Activated CD4-positive, alpha-beta memory T cell treated with anti-CD3 and anti-CD28 coated beads for 36 hours (primary cell): ENCODE measurements at regions of chr10 and their contacts with region 1.

Region 1: GRCh38 chr10:124741281-124741921 is 2.8 kb downstream of the FAM53B start:
- DNase-seq: peak; percentile 86
- H3K4me3 Mint-ChIP-seq: peak overlapping the region; percentile 91
- H3K27ac Mint-ChIP-seq: peak overlapping the region; percentile 88
- H3K4me1 Mint-ChIP-seq: peaks cover 72% of the 10 kb centered on the region
- H3K27me3 Mint-ChIP-seq: no peaks in the 10 kb centered on the region

Region 2: DNA sequence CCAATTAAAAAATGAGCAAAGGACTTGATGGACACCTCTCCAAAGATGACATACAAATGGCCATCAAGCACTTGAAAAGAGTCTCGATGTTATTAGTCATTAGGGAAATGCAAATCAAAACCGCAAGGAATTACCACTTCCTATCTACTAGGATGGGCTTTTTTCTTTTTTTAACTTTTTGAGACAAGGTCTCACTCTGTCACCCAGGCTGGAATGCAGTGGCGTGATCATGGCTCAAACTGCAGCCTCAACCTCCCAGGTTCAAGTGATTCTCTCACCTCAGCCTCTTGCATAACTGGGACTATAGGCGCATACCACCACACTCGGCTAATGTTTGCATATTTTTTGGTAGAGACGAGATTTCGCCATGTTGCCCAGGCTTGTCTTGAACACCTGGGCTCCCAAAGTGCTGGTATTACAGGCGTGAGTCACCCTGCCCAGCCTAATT is 305.2 kb before region 1 on chr10:
- CTCF ChIA-PET with region 1: no interaction called
- POLR2A ChIA-PET with region 1: no interaction called
- intact Hi-C with region 1: no loop called
- DNase-seq: no peak
- H3K4me3 Mint-ChIP-seq: no peak overlapping the region
- H3K27ac Mint-ChIP-seq: no peak overlapping the region
- H3K4me1 Mint-ChIP-seq: no peaks in the 10 kb centered on the region
- H3K27me3 Mint-ChIP-seq: peaks cover 3% of the 10 kb centered on the region

Region 3: DNA sequence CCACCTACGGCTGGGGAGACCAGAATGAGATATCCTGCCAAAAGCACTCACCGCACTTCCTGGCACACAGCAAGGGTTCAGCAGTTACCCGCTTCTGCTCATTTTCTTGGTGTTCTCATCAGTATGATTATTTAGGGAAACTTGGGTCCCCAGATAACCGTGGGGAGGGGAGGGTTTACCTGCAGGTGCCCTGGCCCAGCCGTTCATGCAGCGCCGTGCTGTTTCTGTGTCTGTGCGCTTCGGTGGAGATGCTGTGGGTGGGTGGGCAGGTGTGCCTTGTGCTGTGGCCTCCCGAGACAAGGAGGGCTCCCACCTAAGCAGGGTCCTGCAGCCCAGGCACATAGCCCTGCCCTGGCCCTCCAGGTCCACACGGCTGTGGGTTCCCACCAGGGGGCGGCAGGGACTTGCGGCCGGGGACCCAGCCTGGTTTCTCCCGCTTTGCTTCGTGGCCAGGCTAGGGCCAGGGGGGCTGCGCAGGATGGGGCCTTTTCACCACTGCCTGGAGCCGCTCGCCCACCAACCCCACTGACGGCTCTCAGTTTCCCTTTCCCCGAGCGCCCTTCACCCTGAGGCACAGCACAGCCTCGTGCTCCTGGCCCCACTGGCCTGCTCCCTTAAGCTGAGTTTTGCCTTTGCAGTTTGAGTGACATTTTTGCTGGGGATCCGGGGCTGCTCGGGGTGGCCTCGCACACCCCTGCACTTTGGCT is 201.3 kb before region 1 on chr10:
- CTCF ChIA-PET with region 1: interaction called, 51 read pairs
- POLR2A ChIA-PET with region 1: no interaction called
- intact Hi-C with region 1: loop called (anchors 1 kb)
- DNase-seq: peak; percentile 76
- H3K4me3 Mint-ChIP-seq: no peak overlapping the region
- H3K27ac Mint-ChIP-seq: no peak overlapping the region
- H3K4me1 Mint-ChIP-seq: peaks cover 3% of the 10 kb centered on the region
- H3K27me3 Mint-ChIP-seq: no peaks in the 10 kb centered on the region

Region 4: GRCh38 chr10:124632064-124632531 is 109.3 kb before region 1 on chr10:
- CTCF ChIA-PET with region 1: interaction called, 30 read pairs
- POLR2A ChIA-PET with region 1: interaction called, 4 read pairs
- intact Hi-C with region 1: loop called (anchors 2 kb)
- DNase-seq: peak; percentile 58
- H3K4me3 Mint-ChIP-seq: no peak overlapping the region
- H3K27ac Mint-ChIP-seq: no peak overlapping the region
- H3K4me1 Mint-ChIP-seq: peaks cover 49% of the 10 kb centered on the region
- H3K27me3 Mint-ChIP-seq: no peaks in the 10 kb centered on the region

Region 5: GRCh38 chr10:124657806-124658205 is 83.6 kb before region 1 on chr10:
- CTCF ChIA-PET with region 1: interaction called, 26 read pairs
- POLR2A ChIA-PET with region 1: interaction called, 3 read pairs
- intact Hi-C with region 1: no loop called
- DNase-seq: peak; percentile 58
- H3K4me3 Mint-ChIP-seq: peak overlapping the region; percentile 12
- H3K27ac Mint-ChIP-seq: peak overlapping the region; percentile 79
- H3K4me1 Mint-ChIP-seq: peaks cover 72% of the 10 kb centered on the region
- H3K27me3 Mint-ChIP-seq: no peaks in the 10 kb centered on the region

Region 6: DNA sequence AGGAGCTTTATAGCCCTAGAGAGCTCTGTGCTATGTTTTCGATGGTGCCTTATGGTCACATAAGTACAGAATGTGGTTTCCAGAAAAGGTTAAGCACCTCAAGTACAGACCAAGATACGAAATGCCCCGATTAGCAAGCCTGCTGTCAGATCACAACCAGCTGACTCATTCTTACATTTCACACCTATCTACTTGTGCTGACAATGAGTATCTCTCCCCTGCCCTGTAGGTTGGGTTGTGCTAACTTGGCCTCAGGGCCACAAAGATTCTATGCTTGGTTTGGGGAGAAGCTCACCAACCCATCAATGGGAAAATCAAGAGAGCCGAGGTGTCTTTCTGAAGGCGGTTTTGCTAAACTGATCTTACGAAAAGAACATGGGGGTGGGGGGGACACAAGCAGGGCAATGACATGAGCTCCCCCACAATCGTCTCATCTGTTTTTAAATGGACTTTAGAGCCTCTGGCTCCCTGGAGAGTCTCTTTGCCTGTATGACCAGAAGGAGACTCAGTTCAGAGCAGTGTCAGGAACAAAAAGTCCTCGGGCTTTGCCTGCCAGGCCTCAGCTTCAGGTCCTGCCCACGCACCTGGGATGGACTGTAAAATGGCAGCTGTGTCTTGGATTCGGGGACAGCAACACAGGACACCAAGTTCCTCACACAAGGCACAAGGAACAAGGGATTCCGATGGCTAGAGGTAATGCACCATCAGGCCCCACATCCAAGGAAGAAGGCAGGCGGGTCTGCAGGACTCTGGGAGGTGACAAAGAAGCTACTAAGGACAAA is 52.3 kb before region 1 on chr10:
- CTCF ChIA-PET with region 1: interaction called, 86 read pairs
- POLR2A ChIA-PET with region 1: interaction called, 33 read pairs
- intact Hi-C with region 1: loop called (anchors 1 kb)
- DNase-seq: peak; percentile 87
- H3K4me3 Mint-ChIP-seq: peak overlapping the region; percentile 44
- H3K27ac Mint-ChIP-seq: peak overlapping the region; percentile 92
- H3K4me1 Mint-ChIP-seq: peaks cover 87% of the 10 kb centered on the region
- H3K27me3 Mint-ChIP-seq: no peaks in the 10 kb centered on the region

Region 7: DNA sequence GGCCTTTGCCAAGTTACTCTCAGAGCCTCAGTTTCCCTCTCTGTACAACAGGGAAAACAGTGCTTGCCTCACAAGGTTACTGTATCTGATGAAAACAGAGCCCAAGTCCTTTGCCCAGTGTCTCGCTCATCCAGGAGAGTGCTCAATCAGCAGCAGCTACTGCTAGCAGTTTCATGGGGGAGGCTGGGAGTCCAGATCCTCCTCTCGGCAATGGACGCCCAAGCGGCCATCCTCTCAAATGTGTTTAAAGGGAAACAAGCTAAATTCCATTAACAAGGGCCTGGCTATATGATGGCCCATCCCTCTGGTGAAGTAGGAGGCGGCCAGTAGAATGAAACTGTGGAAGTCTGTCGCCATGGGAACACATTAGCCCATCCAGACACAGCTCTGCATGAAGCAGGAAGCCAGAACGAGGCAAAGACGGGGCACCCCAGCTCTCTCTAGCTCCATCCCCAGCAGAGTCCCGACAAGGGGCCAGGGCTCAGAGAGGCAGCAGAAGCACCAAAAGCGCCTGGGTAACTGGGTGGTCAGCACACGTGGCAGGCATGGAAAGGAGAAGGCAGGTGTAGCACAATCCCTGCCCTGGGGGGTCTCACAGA is 32.4 kb before region 1 on chr10:
- CTCF ChIA-PET with region 1: interaction called, 39 read pairs
- POLR2A ChIA-PET with region 1: interaction called, 6 read pairs
- intact Hi-C with region 1: no loop called
- DNase-seq: no peak
- H3K4me3 Mint-ChIP-seq: no peak overlapping the region
- H3K27ac Mint-ChIP-seq: peak overlapping the region; percentile 66
- H3K4me1 Mint-ChIP-seq: peaks cover 89% of the 10 kb centered on the region
- H3K27me3 Mint-ChIP-seq: no peaks in the 10 kb centered on the region

Region 8: GRCh38 chr10:124820121-124820520 is 78.7 kb after region 1 on chr10:
- CTCF ChIA-PET with region 1: no interaction called
- POLR2A ChIA-PET with region 1: no interaction called
- intact Hi-C with region 1: no loop called
- DNase-seq: no peak
- H3K4me3 Mint-ChIP-seq: no peak overlapping the region
- H3K27ac Mint-ChIP-seq: no peak overlapping the region
- H3K4me1 Mint-ChIP-seq: peaks cover 3% of the 10 kb centered on the region
- H3K27me3 Mint-ChIP-seq: no peaks in the 10 kb centered on the region